ENCODE measurements at regions of chr17 and their contacts with region 1.

Region 1: GRCh38 chr17:48406936-48407567 is 23.0 kb downstream of the SKAP1 start:
- DNase-seq: no peak
- H3K4me3 ChIP-seq: no peak overlapping the region
- H3K27ac ChIP-seq: no peak overlapping the region
- H3K4me1 ChIP-seq: peaks cover 0 to 5% (median 0%) of the 10 kb centered on the region in 4 donors
- H3K27me3 ChIP-seq: peaks cover 41% of the 10 kb centered on the region
- CTCF ChIP-seq: no peak
- EP300 ChIP-seq: no peak
- POLR2A ChIP-seq: no peak

Region 2: GRCh38 chr17:48384164-48384563 is 22.9 kb before region 1 on chr17:
- in situ Hi-C with region 1: no loop called
- intact Hi-C with region 1: loop called (anchors 1 kb)
- DNase-seq: no peak
- H3K4me3 ChIP-seq: no peak overlapping the region
- H3K27ac ChIP-seq: no peak overlapping the region
- H3K4me1 ChIP-seq: no peaks in the 10 kb centered on the region
- H3K27me3 ChIP-seq: peaks cover 23% of the 10 kb centered on the region
- CTCF ChIP-seq: no peak
- EP300 ChIP-seq: no peak
- POLR2A ChIP-seq: no peak

Region 3: DNA sequence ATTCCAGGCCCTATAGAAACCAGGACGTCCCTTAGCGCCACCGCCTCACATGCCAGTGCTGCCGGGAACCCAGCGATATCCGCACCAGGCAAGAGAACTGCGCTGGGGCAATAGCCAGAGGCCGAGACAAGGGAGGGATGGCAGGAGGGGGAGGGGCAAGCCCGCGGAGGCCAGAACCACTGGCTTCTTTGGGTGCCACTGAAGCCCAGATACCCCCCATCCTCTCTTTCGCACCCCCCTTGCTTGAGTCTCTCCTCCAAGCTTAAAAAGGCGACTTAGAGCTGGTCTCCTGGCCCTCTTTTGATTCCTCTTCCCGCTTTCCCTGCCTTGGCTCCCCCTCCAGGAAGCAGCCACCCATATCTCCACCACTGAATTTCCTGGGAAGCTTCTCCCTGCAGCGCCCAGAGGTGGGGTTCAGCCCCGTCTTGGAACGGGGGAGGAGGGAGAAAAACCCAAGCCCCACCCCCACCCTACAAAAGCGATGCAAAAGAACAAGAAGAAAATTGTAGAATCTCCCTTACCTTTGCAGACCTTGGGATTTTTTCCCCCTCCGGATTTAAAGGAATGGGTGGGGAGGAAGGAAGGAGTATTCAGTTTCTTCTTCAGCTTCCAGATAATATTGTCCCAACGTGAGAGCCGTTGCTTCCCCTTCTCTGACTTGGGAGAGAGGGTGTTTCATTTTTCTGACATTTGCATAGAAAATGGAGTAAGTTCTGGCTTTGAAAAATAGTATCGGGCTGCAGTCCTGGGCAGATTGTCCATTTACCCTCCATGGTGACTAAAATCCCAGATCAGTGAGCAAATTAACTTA is 197.1 kb after region 1 on chr17:
- in situ Hi-C with region 1: no loop called
- intact Hi-C with region 1: no loop called
- DNase-seq: peak; percentile 75
- H3K4me3 ChIP-seq: peak overlapping the region; percentile 7 to 66 (median 41)
- H3K27ac ChIP-seq: peak overlapping the region; percentile 86 to 95 (median 90)
- H3K4me1 ChIP-seq: peaks cover 6 to 49% (median 39%) of the 10 kb centered on the region in 4 donors
- H3K27me3 ChIP-seq: peaks cover 17% of the 10 kb centered on the region
- CTCF ChIP-seq: no peak
- EP300 ChIP-seq: no peak
- POLR2A ChIP-seq: peak; percentile 69